CD8-positive, alpha-beta memory T cell (primary cell): ENCODE measurements at regions of chr17 and their contacts with region 1.

Region 1: GRCh38 chr17:50853015-50853615 is 13.0 kb downstream of the TOB1 start:
- DNase-seq: no peak
- H3K4me3 ChIP-seq: no peak overlapping the region
- H3K4me3 Mint-ChIP-seq: peak overlapping the region in 4 of 7 donors; percentile 68 to 86 (median 84)
- H3K27ac ChIP-seq: no peak overlapping the region
- H3K27ac Mint-ChIP-seq: peak overlapping the region in 6 of 8 donors; percentile 59 to 93 (median 84)
- H3K4me1 ChIP-seq: peaks cover 8% of the 10 kb centered on the region
- H3K4me1 Mint-ChIP-seq: peaks cover 11 to 15% (median 14%) of the 10 kb centered on the region in 3 donors
- H3K27me3 ChIP-seq: no peaks in the 10 kb centered on the region
- H3K27me3 Mint-ChIP-seq: peaks cover 0 to 4% of the 10 kb centered on the region in 2 donors

Region 2: DNA sequence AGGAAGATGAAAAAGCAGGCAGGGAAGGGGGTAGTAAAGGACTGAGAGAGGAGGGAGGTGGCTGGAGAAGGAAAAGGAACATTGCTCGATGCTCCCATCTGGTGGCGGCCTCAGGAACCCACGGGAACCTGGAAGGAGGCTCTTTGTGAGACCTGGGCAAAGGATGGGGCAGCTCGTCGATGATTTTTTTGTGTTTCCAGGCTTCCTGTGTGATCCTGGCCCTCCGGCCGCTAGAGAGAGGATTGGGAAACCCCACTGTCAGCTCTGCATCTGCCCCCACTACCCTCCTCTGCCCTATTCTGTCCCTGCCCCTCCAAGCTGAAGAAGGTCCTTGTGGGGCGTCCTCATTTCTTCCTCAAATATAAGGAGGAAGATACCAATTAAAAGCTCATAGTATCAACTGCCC is 11.2 kb before region 1 on chr17:
- CTCF ChIA-PET with region 1: interaction called, 23 read pairs
- POLR2A ChIA-PET with region 1: no interaction called
- DNase-seq: peak in 3 of 5 donors; percentile 14 to 61 (median 32)
- H3K4me3 ChIP-seq: no peak overlapping the region
- H3K4me3 Mint-ChIP-seq: no peak overlapping the region
- H3K27ac ChIP-seq: no peak overlapping the region
- H3K27ac Mint-ChIP-seq: no peak overlapping the region
- H3K4me1 ChIP-seq: no peaks in the 10 kb centered on the region
- H3K4me1 Mint-ChIP-seq: peaks cover 0 to 6% (median 0%) of the 10 kb centered on the region in 3 donors
- H3K27me3 ChIP-seq: no peaks in the 10 kb centered on the region
- H3K27me3 Mint-ChIP-seq: peaks cover 0 to 1% of the 10 kb centered on the region in 2 donors

Region 3: DNA sequence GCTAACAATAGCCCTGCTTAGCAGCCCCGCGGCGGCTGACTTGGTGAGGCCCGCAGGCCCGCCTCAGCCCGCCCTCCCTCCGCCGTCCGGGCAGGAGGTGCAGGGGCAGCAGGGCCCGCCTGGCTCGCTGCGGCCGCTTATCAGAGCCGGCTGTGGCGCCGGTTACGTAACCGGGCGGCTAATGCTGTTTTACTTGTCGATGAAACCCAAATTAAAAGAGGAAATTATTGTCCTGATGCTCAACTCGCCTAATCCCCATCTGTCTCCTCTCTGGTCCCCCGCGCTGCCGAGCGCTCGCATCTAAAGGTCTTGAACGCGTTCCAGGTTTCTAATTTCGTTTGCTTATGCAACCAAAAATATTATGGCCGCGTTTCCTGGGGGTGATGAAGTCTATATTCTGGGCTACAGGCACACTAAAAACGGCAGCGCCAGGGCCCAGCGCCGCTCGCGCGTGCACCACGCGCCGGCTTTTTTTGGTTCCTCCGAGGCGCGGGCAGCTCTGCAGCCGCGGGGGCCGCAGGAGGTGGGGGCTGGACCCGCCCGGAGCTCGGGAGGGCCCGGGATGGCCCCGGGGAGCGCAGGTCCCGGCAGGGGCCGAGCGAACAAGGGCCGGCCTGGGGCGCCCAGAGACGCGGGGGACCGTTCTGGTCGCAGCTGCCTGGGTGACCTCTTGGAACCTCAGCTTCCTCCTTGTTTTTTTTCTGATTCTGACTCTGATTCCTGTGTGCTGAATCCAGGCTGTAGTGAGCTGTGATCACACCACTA is 78.2 kb after region 1 on chr17:
- CTCF ChIA-PET with region 1: interaction called, 10 read pairs
- POLR2A ChIA-PET with region 1: no interaction called
- DNase-seq: peak; percentile 24 to 67 (median 54)
- H3K4me3 ChIP-seq: peak overlapping the region; percentile 60
- H3K4me3 Mint-ChIP-seq: peak overlapping the region; percentile 75 to 97 (median 89)
- H3K27ac ChIP-seq: peak overlapping the region; percentile 44
- H3K27ac Mint-ChIP-seq: peak overlapping the region; percentile 15 to 99 (median 96)
- H3K4me1 ChIP-seq: peaks cover 25% of the 10 kb centered on the region
- H3K4me1 Mint-ChIP-seq: peaks cover 28 to 46% (median 36%) of the 10 kb centered on the region in 3 donors
- H3K27me3 ChIP-seq: no peaks in the 10 kb centered on the region
- H3K27me3 Mint-ChIP-seq: peaks cover 0 to 1% of the 10 kb centered on the region in 2 donors

Region 4: GRCh38 chr17:50949989-50950881 is 97.1 kb after region 1 on chr17:
- CTCF ChIA-PET with region 1: interaction called, 248 read pairs
- POLR2A ChIA-PET with region 1: interaction called, 4 read pairs
- DNase-seq: peak; percentile 27 to 74 (median 40)
- H3K4me3 ChIP-seq: no peak overlapping the region
- H3K4me3 Mint-ChIP-seq: no peak overlapping the region
- H3K27ac ChIP-seq: peak overlapping the region; percentile 28
- H3K27ac Mint-ChIP-seq: peak overlapping the region in 2 of 8 donors; percentile 2 to 92
- H3K4me1 ChIP-seq: peaks cover 15% of the 10 kb centered on the region
- H3K4me1 Mint-ChIP-seq: peaks cover 8 to 23% (median 22%) of the 10 kb centered on the region in 3 donors
- H3K27me3 ChIP-seq: no peaks in the 10 kb centered on the region
- H3K27me3 Mint-ChIP-seq: no peaks in the 10 kb centered on the region

Region 5: GRCh38 chr17:50956750-50957523 is 103.8 kb after region 1 on chr17:
- CTCF ChIA-PET with region 1: interaction called, 248 read pairs
- POLR2A ChIA-PET with region 1: interaction called, 5 read pairs
- DNase-seq: peak; percentile 54 to 77 (median 59)
- H3K4me3 ChIP-seq: no peak overlapping the region
- H3K4me3 Mint-ChIP-seq: no peak overlapping the region
- H3K27ac ChIP-seq: no peak overlapping the region
- H3K27ac Mint-ChIP-seq: peak overlapping the region in 4 of 8 donors; percentile 34 to 77 (median 67)
- H3K4me1 ChIP-seq: peaks cover 5% of the 10 kb centered on the region
- H3K4me1 Mint-ChIP-seq: peaks cover 2 to 5% (median 3%) of the 10 kb centered on the region in 3 donors
- H3K27me3 ChIP-seq: no peaks in the 10 kb centered on the region
- H3K27me3 Mint-ChIP-seq: no peaks in the 10 kb centered on the region